Activated T-helper 1 cell treated with anti-CD3 and anti-CD28 coated beads, Interleukin-12 subunit alpha, Interleukin-12 subunit beta, Interleukin-2, Interleukin-4 antibody, amounts not matched to agents 30 ng/mL and 10 ng/mL and 1 ng/mL, durations not matched to agents 14 hours and 24 hours and 36 hours (primary cell): ENCODE measurements at regions of chr11 and their contacts with region 1.

Region 1: DNA sequence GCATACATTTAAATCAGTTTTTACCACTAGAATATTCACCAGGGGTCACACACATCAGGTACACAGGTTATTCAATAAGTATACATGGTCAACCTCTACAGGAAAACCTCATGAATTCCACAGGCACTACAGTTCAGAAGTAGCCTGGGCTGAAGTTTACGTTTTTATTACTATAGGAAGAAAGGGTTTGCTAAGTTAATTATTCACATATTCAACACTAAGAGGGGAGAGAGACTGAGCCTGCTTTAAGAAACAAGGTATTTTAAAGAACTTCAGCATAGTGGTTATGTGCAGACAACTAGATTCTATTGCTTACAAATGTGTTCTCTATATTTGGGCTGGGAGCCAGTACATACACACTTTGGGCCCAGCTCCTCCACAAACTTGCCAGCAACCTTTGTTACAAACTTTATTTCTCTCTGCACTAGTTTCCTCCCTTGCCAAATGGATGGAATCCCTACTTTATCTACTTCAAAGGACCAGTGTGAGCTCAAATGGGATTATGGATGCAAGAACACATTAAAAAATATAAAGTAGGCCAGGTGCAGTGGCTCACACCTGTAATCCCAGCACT is 31.9 kb downstream of the IL18BP start:
- DNase-seq: no peak
- H3K4me3 Mint-ChIP-seq: no peak overlapping the region
- H3K27ac Mint-ChIP-seq: no peak overlapping the region
- H3K4me1 Mint-ChIP-seq: peaks cover 33% of the 10 kb centered on the region
- H3K27me3 Mint-ChIP-seq: no peaks in the 10 kb centered on the region

Region 2: GRCh38 chr11:72091005-72091691 is 60.6 kb after region 1 on chr11:
- intact Hi-C with region 1: loop called (anchors 1 kb)
- DNase-seq: peak; percentile 56
- H3K4me3 Mint-ChIP-seq: no peak overlapping the region
- H3K27ac Mint-ChIP-seq: no peak overlapping the region
- H3K4me1 Mint-ChIP-seq: peaks cover 7% of the 10 kb centered on the region
- H3K27me3 Mint-ChIP-seq: no peaks in the 10 kb centered on the region

Region 3: DNA sequence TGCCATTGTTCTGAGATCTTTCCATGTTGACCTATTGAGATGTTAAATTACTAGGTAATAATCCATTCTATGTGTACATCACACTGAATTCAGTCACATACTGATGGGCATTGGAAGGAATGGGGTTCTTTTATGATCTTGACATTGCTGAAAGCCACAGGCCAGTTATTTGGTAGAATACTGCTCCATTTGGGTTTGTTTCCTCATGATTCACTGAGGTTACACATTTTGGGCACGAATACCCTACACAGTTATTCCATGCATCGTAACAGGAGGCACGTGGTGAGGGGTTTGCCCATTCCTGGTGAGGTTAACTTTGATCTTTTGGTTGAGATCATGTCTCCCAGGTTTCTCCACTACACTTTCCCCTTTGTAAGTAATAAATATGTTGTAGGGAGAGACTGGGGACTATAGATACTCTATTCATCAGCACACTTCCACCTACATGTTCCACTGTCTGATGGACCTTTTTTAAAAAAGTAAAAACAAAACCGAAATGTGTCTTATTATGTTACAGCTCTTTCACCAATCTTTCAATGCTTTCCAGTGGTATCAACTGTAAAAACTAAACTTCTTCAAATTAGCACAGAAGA is 149.3 kb after region 1 on chr11:
- intact Hi-C with region 1: loop called (anchors 1 kb)
- DNase-seq: no peak
- H3K4me3 Mint-ChIP-seq: no peak overlapping the region
- H3K27ac Mint-ChIP-seq: no peak overlapping the region
- H3K4me1 Mint-ChIP-seq: peaks cover 5% of the 10 kb centered on the region
- H3K27me3 Mint-ChIP-seq: peaks cover 9% of the 10 kb centered on the region